IMR-90 (cell line): ENCODE measurements at regions of chr10 and their contacts with region 1.

Region 1: GRCh38 chr10:72503241-72503640 is 122.6 kb downstream of the MICU1 start:
- DNase-seq: peak; percentile 69
- ATAC-seq: peak; percentile 98
- H3K4me3 ChIP-seq: no peak overlapping the region
- H3K27ac ChIP-seq: no peak overlapping the region
- H3K4me1 ChIP-seq: peaks cover 3% of the 10 kb centered on the region
- H3K27me3 ChIP-seq: no peaks in the 10 kb centered on the region
- CTCF ChIP-seq: no peak
- POLR2A ChIP-seq: no peak
- RAD21 ChIP-seq: no peak

Region 2: GRCh38 chr10:72414642-72415041 is 88.6 kb before region 1 on chr10:
- CTCF ChIA-PET with region 1: no interaction called
- POLR2A ChIA-PET with region 1: no interaction called
- dilution Hi-C with region 1: no loop called
- in situ Hi-C with region 1: no loop called
- intact Hi-C with region 1: no loop called
- DNase-seq: no peak
- ATAC-seq: no peak
- H3K4me3 ChIP-seq: no peak overlapping the region
- H3K27ac ChIP-seq: no peak overlapping the region
- H3K4me1 ChIP-seq: no peaks in the 10 kb centered on the region
- H3K27me3 ChIP-seq: no peaks in the 10 kb centered on the region
- CTCF ChIP-seq: no peak
- POLR2A ChIP-seq: no peak
- RAD21 ChIP-seq: no peak

Region 3: GRCh38 chr10:72483471-72483870 is 19.8 kb before region 1 on chr10:
- CTCF ChIA-PET with region 1: no interaction called
- POLR2A ChIA-PET with region 1: interaction called, 3 read pairs
- dilution Hi-C with region 1: no loop called
- in situ Hi-C with region 1: no loop called
- intact Hi-C with region 1: loop called (anchors 2 kb)
- DNase-seq: no peak
- ATAC-seq: no peak
- H3K4me3 ChIP-seq: no peak overlapping the region
- H3K27ac ChIP-seq: no peak overlapping the region
- H3K4me1 ChIP-seq: no peaks in the 10 kb centered on the region
- H3K27me3 ChIP-seq: no peaks in the 10 kb centered on the region
- CTCF ChIP-seq: no peak
- POLR2A ChIP-seq: no peak
- RAD21 ChIP-seq: no peak